Esophagus squamous epithelium (tissue), 5 donors: ENCODE measurements at regions of chrX and their contacts with region 1.

Region 1: DNA sequence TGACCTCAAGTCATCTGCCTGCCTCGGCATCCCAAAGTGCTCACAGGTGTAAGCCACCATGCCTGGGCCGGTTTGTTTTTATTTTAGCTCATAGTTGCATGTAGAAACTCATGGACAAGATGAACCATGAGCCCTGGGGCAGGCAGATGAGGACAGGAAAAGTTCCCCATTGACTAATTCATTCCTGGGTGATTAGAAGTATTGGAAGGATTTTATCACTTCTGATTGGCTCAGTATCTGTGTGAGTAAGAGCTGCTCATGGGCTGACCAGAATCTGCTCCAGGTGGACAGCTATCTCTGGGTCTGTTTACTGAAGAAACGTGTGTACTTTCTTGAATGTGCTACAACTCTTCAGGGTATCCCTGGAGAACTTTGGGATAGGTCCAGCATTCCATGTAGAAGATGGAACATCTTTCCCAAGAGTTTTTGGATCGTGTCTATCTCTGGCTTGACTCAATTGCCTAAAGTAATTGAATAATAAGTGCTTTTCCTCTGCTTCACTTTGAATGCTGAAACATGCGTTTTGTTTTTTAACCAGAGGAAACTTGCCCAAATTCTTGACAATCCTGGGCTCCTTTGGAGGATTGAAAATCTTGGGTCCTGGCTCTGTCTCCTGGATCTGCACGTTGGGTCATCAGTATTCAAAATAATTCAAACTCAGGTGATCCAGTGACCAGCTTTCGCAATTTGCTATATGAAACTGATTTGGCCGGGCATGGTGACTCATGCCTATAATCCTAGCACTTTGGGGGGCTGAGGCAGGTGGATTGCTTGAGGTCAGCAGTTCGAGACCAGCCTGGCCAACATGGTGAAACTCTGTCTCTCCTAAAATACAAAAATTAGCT is 88.6 kb upstream of the DHRSX start:
- DNase-seq: no peak
- H3K4me3 ChIP-seq: no peak overlapping the region
- H3K27ac ChIP-seq: no peak overlapping the region
- H3K4me1 ChIP-seq: peaks cover 0 to 22% (median 0%) of the 10 kb centered on the region in 3 donors
- H3K27me3 ChIP-seq: peaks cover 0 to 18% (median 1%) of the 10 kb centered on the region in 4 donors
- CTCF ChIP-seq: no peak
- POLR2A ChIP-seq: no peak

Region 2: GRCh38 chrX:1649621-1650020 is 939.8 kb before region 1 on chrX:
- intact Hi-C with region 1: loop called (anchors 5 kb)
- DNase-seq: no peak
- H3K4me3 ChIP-seq: no peak overlapping the region
- H3K27ac ChIP-seq: no peak overlapping the region
- H3K4me1 ChIP-seq: no peaks in the 10 kb centered on the region
- H3K27me3 ChIP-seq: peaks cover 0 to 10% (median 0%) of the 10 kb centered on the region in 4 donors
- CTCF ChIP-seq: no peak
- POLR2A ChIP-seq: no peak

Region 3: DNA sequence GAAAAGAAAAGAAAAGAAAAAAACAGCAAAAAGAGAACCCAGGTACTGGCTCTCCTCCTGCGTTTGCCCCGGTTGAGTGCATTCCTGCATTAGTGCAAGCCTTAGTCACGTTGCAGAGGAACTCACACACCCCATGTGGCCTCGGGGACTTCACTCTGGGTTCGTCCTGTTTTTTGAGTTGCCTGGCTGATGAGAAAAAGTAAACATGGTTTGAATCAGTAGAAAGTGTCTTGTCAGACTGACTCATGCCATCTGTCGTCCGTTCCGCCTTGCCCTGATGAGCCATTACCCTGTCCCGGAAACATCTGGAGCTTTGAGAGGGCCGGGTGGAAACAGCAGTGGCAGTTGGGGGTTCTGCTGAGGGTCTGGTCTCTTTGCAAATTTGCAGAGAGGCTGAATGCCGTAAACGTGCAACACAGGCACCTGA is 117.9 kb after region 1 on chrX:
- intact Hi-C with region 1: no loop called
- DNase-seq: no peak
- H3K4me3 ChIP-seq: peak overlapping the region in 1 of 4 donors; percentile 43
- H3K27ac ChIP-seq: peak overlapping the region; percentile 72 to 83 (median 78)
- H3K4me1 ChIP-seq: peaks cover 64 to 94% (median 75%) of the 10 kb centered on the region in 3 donors
- H3K27me3 ChIP-seq: no peaks in the 10 kb centered on the region
- CTCF ChIP-seq: peak in 1 of 6 experiments; percentile 5
- POLR2A ChIP-seq: no peak

Region 4: GRCh38 chrX:3468031-3468430 is 878.6 kb after region 1 on chrX:
- intact Hi-C with region 1: no loop called
- DNase-seq: no peak
- H3K4me3 ChIP-seq: no peak overlapping the region
- H3K27ac ChIP-seq: no peak overlapping the region
- H3K4me1 ChIP-seq: no peaks in the 10 kb centered on the region
- H3K27me3 ChIP-seq: no peaks in the 10 kb centered on the region
- CTCF ChIP-seq: no peak
- POLR2A ChIP-seq: no peak